Prostate gland (tissue), 2 donors: ENCODE measurements at regions of chr4 and their contacts with region 1.

Region 1: DNA sequence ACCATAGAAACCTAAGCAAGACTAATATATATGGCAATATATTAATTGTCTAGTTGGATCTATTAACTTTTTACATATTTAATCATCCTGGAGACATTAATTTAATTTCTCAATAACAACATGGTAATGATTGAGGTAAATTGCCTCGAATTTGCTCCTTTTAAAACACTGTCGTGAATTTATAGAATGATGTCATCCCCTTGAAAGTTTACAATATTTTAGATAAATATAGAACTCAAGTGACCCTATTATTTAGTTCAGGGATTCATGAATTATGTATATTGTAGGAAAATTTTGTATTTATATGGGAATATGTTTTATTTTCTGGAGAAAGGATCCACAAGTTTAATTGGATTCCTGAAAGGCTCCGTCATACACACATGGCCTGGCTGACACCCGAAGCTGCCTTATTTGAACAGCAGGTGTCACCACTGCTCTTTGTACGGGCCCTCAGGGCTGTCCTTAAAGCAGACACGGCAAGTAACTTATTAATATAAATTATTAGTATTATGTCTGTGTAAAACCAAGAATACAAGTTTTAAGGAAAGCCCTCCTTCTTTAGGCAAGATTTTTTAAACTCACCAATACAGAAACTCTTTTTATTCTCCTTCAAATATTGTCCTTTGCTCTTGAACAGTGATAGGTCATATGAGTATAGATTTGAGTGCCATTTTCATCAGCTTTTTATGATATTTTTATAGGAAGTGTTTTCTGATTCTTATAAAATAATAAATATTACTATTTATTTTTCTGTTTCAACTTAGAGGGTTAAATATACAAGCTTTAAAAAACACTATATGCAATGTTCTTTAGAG is 1.9 kb upstream of the PLRG1 start:
- DNase-seq: peak; percentile 58
- H3K4me3 ChIP-seq: no peak overlapping the region
- H3K27ac ChIP-seq: no peak overlapping the region
- H3K4me1 ChIP-seq: peaks cover 3% of the 10 kb centered on the region
- H3K27me3 ChIP-seq: no peaks in the 10 kb centered on the region
- CTCF ChIP-seq: peak; percentile 39 to 75 (median 64)
- POLR2A ChIP-seq: no peak

Region 2: GRCh38 chr4:153585026-153585425 is 967.1 kb before region 1 on chr4:
- intact Hi-C with region 1: no loop called
- DNase-seq: no peak
- H3K4me3 ChIP-seq: no peak overlapping the region
- H3K27ac ChIP-seq: no peak overlapping the region
- H3K4me1 ChIP-seq: no peaks in the 10 kb centered on the region
- H3K27me3 ChIP-seq: no peaks in the 10 kb centered on the region
- CTCF ChIP-seq: no peak
- POLR2A ChIP-seq: no peak

Region 3: DNA sequence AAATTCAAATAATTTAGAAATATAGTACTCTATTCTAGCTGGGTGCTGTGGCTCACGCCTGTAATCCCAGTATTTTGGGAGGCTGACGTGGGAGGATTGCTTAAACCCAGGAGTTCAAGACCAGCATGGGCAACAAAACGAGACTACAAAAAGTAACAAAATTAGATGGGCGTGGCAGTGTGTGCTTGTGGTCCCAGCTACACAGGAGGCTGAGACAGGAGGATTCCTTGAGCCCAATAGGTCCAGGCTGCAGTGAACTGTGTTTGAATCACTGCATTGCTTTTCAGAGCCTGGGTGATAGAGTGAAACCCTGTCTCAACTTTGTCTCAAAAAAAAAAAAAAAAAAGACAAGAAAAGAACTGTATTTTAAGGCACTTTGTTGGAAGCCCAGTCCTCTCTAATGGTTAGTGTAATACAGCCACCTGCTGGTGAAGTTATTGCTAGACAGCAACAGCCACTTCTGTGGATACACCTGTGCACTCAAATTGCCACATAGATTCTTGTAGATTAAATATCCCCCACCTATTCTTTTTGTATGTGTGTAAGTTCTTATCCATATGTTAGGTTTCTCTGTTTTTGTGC is 70.4 kb after region 1 on chr4:
- intact Hi-C with region 1: loop called (anchors 5 kb)
- DNase-seq: peak; percentile 10
- H3K4me3 ChIP-seq: no peak overlapping the region
- H3K27ac ChIP-seq: no peak overlapping the region
- H3K4me1 ChIP-seq: no peaks in the 10 kb centered on the region
- H3K27me3 ChIP-seq: no peaks in the 10 kb centered on the region
- CTCF ChIP-seq: peak in 2 of 4 experiments; percentile 47 to 48
- POLR2A ChIP-seq: no peak

Region 4: DNA sequence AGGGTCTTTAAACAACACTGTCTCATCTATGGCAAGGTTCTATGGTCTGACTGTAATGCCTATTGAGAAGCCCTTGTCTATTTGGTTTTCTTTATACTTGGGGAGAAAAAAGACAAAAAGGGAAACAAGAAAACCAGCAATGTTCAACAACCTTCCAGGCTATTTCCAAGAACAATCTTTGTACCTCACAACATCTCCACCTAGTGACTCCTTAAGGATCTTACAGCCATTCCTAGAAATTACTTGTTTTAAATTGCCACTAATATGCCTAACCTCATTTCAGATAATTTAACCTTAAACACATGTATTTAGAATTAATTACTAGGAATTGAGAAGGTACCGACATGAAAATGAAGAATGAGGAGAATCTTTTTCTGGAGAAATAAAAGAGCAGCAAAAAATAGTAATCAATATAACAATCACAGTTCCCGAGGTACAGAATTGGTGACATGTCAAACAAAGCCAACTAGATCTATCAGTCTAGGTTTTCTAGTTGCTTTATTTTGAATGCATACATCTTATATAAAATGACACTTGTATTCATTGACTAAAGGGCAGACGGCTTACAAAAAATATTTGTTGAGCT is 227.4 kb after region 1 on chr4:
- intact Hi-C with region 1: loop called (anchors 10 kb)
- DNase-seq: no peak
- H3K4me3 ChIP-seq: no peak overlapping the region
- H3K27ac ChIP-seq: no peak overlapping the region
- H3K4me1 ChIP-seq: no peaks in the 10 kb centered on the region
- H3K27me3 ChIP-seq: no peaks in the 10 kb centered on the region
- CTCF ChIP-seq: peak in 3 of 4 experiments; percentile 20 to 49 (median 42)
- POLR2A ChIP-seq: no peak